ENCODE measurements at regions of chr5 and their contacts with region 1.

Region 1: DNA sequence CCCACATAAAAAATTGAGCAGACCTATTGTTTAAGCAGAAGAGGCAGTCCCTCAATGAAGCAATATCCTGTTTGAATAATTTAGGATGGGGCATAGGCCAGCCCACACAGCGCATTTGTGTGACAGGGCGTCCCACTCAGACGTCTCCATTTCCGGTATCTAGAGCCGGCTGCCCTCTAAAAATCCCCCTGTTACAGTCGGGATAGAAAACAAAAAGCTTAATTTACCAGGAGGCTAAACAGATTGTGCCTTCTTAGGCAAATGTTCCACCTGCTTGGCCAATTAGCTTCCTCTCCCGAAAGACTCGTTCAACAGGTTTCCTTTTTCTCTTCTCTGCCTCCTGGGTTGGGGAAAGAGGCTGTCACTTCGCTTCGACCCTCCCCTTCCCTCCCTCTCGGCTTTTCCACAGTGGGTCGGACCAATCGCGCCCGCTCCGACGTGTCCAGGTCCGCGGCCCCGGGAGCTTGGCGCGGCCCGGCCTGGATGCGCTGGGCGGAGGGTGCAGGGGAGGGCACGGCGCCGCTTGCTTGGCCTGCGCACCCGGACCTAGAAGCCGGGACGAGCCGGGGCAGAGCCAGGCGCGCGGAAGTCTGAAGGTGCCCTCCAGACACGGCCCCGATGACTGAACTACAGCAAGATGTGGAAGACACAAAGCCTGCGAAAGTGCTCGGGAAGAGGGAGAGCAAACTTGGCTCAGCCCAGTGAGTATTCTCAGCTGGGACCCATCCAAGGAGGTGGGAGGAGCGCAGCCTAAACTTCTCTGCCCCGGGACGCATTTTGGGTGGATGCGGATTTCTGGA is at the start of gene GRAMD2B:
- DNase-seq: peak; percentile 96
- H3K4me3 Mint-ChIP-seq: peak within 1 kb of the TSS; percentile 88
- H3K27ac Mint-ChIP-seq: peak within 1 kb of the TSS; percentile 90
- H3K4me1 Mint-ChIP-seq: peaks cover 26% of the 10 kb centered on the region
- H3K27me3 Mint-ChIP-seq: no peaks in the 10 kb centered on the region
- CTCF ChIP-seq: no peak
- total RNA-seq, gene GRAMD2B: 7.1 and 11.1 TPM in 2 replicates

Region 2: DNA sequence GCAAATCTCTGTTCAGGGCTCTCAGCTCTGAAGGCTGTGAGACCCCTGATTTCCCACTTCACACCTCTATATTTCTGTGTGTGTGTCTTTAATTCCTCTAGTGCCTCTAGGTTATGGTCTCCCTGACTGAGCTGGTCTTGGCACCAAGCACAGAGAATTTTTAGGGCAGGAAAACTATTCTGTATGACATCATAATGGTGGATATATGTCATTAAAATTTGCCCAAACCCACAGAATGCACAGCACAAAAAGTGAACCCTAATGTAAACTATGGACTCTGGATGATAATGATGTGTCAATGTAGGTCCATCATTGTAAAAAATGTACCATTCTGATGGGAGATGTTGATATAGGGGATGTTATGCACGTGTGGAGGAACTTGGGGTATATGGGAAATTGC is 482.5 kb before region 1 on chr5:
- CTCF ChIA-PET with region 1: no interaction called
- POLR2A ChIA-PET with region 1: no interaction called
- intact Hi-C with region 1: no loop called
- DNase-seq: no peak
- H3K4me3 Mint-ChIP-seq: no peak overlapping the region
- H3K27ac Mint-ChIP-seq: no peak overlapping the region
- H3K4me1 Mint-ChIP-seq: no peaks in the 10 kb centered on the region
- H3K27me3 Mint-ChIP-seq: no peaks in the 10 kb centered on the region
- CTCF ChIP-seq: no peak

Region 3: DNA sequence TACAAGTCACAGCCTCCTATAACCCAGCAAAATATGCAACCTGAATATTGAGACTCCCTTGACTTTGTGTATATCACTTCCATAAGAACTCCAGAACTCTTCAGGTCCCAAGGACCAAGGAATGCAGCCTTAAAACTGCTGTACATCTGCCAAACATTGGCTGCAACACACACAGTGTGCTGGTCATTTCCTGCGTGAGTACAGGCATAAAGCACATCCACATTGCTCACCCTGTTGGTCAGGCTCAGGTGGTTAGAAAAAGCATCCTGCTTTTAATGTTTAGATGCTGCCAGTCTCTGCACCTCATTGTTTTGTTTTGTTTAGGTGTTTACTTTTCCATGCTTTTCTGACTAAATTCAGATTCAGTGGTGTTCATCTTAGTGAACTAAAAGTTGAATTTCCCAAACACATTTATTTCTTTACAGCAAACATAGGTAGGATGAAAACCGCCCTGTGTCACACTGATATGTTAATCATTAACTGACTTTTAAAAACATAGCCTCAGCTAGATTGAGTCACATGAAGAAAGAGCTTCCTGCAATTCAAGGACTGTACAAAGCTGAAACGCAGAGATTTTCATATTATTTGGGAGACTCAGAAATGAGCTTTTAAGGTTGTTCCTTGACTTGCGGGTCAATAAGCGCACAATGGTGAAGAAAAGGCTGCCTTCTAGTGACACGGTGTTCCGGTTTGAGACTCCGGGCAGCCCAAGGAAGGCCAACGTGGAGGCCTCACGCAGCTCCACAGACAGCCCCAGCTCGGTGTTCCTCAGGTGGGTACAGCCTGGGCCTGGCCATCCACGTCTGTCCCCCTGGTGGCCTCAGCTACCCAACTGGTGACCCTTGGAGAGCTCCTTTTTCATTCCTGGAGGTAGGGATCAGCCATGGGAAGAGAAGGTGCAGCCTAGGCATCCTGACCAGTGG is 52.1 kb before region 1 on chr5:
- CTCF ChIA-PET with region 1: interaction called, 15 read pairs
- POLR2A ChIA-PET with region 1: interaction called, 82 read pairs
- intact Hi-C with region 1: no loop called
- DNase-seq: peak; percentile 50
- H3K4me3 Mint-ChIP-seq: no peak overlapping the region
- H3K27ac Mint-ChIP-seq: no peak overlapping the region
- H3K4me1 Mint-ChIP-seq: peaks cover 27% of the 10 kb centered on the region
- H3K27me3 Mint-ChIP-seq: no peaks in the 10 kb centered on the region
- CTCF ChIP-seq: peak; percentile 7

Region 4: DNA sequence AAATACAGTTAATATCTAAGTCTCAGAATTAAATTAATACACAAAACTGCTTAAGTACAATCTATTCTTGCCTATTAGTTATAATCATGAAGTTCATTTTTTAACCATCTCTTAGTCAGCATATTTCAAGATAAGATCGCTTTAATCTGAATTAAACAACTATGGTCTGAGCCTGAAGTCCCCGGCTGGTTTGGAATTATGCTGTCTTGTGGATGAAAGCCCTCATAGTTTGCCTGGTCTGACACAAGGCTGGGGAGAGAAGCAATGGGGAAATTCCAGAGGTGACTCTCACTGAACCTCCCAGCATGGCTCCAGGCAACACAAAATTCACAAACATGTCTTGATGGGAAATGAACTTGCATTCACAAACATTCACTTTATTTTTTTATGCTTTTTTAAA is 28.0 kb before region 1 on chr5:
- CTCF ChIA-PET with region 1: no interaction called
- POLR2A ChIA-PET with region 1: interaction called, 11 read pairs
- intact Hi-C with region 1: no loop called
- DNase-seq: peak; percentile 41
- H3K4me3 Mint-ChIP-seq: no peak overlapping the region
- H3K27ac Mint-ChIP-seq: no peak overlapping the region
- H3K4me1 Mint-ChIP-seq: peaks cover 4% of the 10 kb centered on the region
- H3K27me3 Mint-ChIP-seq: no peaks in the 10 kb centered on the region
- CTCF ChIP-seq: no peak

Region 5: GRCh38 chr5:126433701-126434100 is 10.5 kb after region 1 on chr5:
- CTCF ChIA-PET with region 1: interaction called, 3 read pairs
- POLR2A ChIA-PET with region 1: interaction called, 67 read pairs
- intact Hi-C with region 1: loop called (anchors 1 kb)
- DNase-seq: no peak
- H3K4me3 Mint-ChIP-seq: peak overlapping the region; percentile 8
- H3K27ac Mint-ChIP-seq: peak overlapping the region; percentile 80
- H3K4me1 Mint-ChIP-seq: peaks cover 40% of the 10 kb centered on the region
- H3K27me3 Mint-ChIP-seq: no peaks in the 10 kb centered on the region
- CTCF ChIP-seq: no peak

Region 6: GRCh38 chr5:126477294-126478117 is 54.3 kb after region 1 on chr5:
- CTCF ChIA-PET with region 1: no interaction called
- POLR2A ChIA-PET with region 1: interaction called, 6 read pairs
- intact Hi-C with region 1: loop called (anchors 5 kb)
- DNase-seq: no peak
- H3K4me3 Mint-ChIP-seq: no peak overlapping the region
- H3K27ac Mint-ChIP-seq: no peak overlapping the region
- H3K4me1 Mint-ChIP-seq: peaks cover 3% of the 10 kb centered on the region
- H3K27me3 Mint-ChIP-seq: no peaks in the 10 kb centered on the region
- CTCF ChIP-seq: no peak

Region 7: GRCh38 chr5:126519634-126520592 is 96.7 kb after region 1 on chr5:
- CTCF ChIA-PET with region 1: no interaction called
- POLR2A ChIA-PET with region 1: interaction called, 50 read pairs
- intact Hi-C with region 1: no loop called
- DNase-seq: no peak
- H3K4me3 Mint-ChIP-seq: no peak overlapping the region
- H3K27ac Mint-ChIP-seq: peak overlapping the region; percentile 68
- H3K4me1 Mint-ChIP-seq: peaks cover 26% of the 10 kb centered on the region
- H3K27me3 Mint-ChIP-seq: no peaks in the 10 kb centered on the region
- CTCF ChIP-seq: no peak

Region 8: DNA sequence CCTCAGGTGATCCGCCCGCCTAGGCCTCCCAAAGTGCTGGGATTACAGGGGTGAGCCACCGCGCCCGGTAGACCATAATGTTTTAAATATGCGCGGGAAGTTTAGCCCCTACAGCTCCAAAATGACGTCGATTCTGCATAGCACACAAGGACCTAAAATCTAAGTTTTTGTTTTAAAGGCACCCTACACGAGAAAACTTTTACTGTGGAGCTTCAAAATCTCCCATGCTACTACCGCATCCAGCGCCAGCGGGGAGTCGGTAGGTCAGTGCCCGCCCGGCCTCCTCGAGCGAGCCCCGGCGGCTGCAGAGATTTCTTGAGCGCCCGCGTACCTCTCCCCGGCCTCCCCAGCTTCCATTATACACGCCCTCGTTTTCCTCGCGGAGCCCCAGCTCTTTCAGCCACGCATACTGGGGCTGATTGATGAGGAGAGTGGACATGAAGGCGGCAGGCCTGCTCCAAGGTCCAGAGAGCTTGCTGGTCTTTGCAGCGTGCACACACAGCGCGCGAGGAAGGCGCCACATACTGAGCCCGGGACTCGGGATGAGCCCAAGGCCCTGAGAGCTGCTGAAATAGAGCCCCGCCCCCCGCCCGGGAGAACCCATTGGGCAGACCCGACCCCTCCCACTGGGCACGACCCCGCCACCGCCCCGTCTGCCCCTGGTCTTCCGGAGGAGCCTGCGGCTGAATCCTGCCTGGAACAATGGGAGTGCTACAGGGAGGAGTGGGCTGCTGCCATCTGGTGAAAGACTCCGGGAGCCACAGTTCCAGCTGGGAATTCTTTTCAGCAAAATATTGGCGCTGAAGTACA is 171.7 kb after region 1 on chr5 and contains the start of gene ALDH7A1:
- CTCF ChIA-PET with region 1: interaction called, 4 read pairs
- POLR2A ChIA-PET with region 1: interaction called, 7 read pairs
- intact Hi-C with region 1: loop called (anchors 10 kb)
- DNase-seq: peak; percentile 98
- H3K4me3 Mint-ChIP-seq: peak within 1 kb of the TSS; percentile 91
- H3K27ac Mint-ChIP-seq: peak within 1 kb of the TSS; percentile 84
- H3K4me1 Mint-ChIP-seq: peaks cover 36% of the 10 kb centered on the region
- H3K27me3 Mint-ChIP-seq: no peaks in the 10 kb centered on the region
- CTCF ChIP-seq: peak; percentile 40
- total RNA-seq, gene ALDH7A1: 46.8 and 89.1 TPM in 2 replicates

Measured in MCF 10A (cell line).